Naive thymus-derived CD4-positive, alpha-beta T cell (primary cell): ENCODE measurements at regions of chr6 and their contacts with region 1.

Region 1: GRCh38 chr6:118776607-118777549 is 117.1 kb upstream of the ASF1A start:
- DNase-seq: peak in 8 of 9 donors; percentile 42 to 77 (median 65)
- ATAC-seq: peak; percentile 92
- H3K4me3 ChIP-seq: no peak overlapping the region
- H3K4me3 Mint-ChIP-seq: peak overlapping the region; percentile 1 to 75 (median 48)
- H3K27ac ChIP-seq: no peak overlapping the region
- H3K27ac Mint-ChIP-seq: peak overlapping the region in 8 of 9 donors; percentile 12 to 87 (median 75)
- H3K4me1 ChIP-seq: peaks cover 4 to 11% of the 10 kb centered on the region in 2 donors
- H3K4me1 Mint-ChIP-seq: peaks cover 16 to 31% (median 23%) of the 10 kb centered on the region in 7 donors
- H3K27me3 ChIP-seq: no peaks in the 10 kb centered on the region
- H3K27me3 Mint-ChIP-seq: peaks cover 0 to 17% (median 0%) of the 10 kb centered on the region in 5 donors

Region 2: DNA sequence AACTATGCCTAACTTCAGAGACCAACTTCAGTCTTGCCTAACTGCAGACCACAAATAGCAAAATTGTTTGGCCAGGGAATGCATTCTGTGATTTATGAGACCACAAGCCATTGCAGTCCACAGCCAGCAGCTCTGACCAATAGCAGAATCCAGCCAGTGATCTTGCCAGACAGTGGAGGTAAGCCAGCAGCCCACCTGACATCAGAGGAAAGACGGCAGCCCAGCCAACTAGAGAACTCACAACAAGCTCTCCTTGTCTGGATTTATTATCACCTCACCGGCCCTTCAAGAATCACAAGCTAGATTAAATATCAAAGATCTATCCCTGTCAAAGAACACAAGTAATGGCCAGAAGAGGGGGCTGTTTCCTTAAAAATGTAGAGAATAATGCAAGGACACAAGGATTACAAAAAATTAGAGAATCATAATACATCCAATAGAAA is 936.3 kb before region 1 on chr6:
- CTCF ChIA-PET with region 1: no interaction called
- POLR2A ChIA-PET with region 1: no interaction called
- intact Hi-C with region 1: no loop called
- DNase-seq: no peak
- ATAC-seq: no peak
- H3K4me3 ChIP-seq: no peak overlapping the region
- H3K4me3 Mint-ChIP-seq: no peak overlapping the region
- H3K27ac ChIP-seq: no peak overlapping the region
- H3K27ac Mint-ChIP-seq: no peak overlapping the region
- H3K4me1 ChIP-seq: no peaks in the 10 kb centered on the region
- H3K4me1 Mint-ChIP-seq: no peaks in the 10 kb centered on the region
- H3K27me3 ChIP-seq: no peaks in the 10 kb centered on the region
- H3K27me3 Mint-ChIP-seq: peaks cover 0 to 8% (median 0%) of the 10 kb centered on the region in 5 donors

Region 3: GRCh38 chr6:118122161-118122725 is 654.6 kb before region 1 on chr6:
- CTCF ChIA-PET with region 1: no interaction called
- POLR2A ChIA-PET with region 1: no interaction called
- intact Hi-C with region 1: no loop called
- DNase-seq: no peak
- ATAC-seq: no peak
- H3K4me3 ChIP-seq: no peak overlapping the region
- H3K4me3 Mint-ChIP-seq: no peak overlapping the region
- H3K27ac ChIP-seq: no peak overlapping the region
- H3K27ac Mint-ChIP-seq: no peak overlapping the region
- H3K4me1 ChIP-seq: no peaks in the 10 kb centered on the region
- H3K4me1 Mint-ChIP-seq: peaks cover 0 to 3% (median 0%) of the 10 kb centered on the region in 7 donors
- H3K27me3 ChIP-seq: no peaks in the 10 kb centered on the region
- H3K27me3 Mint-ChIP-seq: peaks cover 0 to 15% (median 8%) of the 10 kb centered on the region in 5 donors

Region 4: GRCh38 chr6:118618679-118619377 is 158.1 kb before region 1 on chr6:
- CTCF ChIA-PET with region 1: interaction called, 4 read pairs
- POLR2A ChIA-PET with region 1: interaction called, 5 read pairs
- intact Hi-C with region 1: loop called in 1 of 2 experiments (anchors 1 kb)
- DNase-seq: peak; percentile 36 to 70 (median 55)
- ATAC-seq: peak; percentile 92
- H3K4me3 ChIP-seq: no peak overlapping the region
- H3K4me3 Mint-ChIP-seq: peak overlapping the region in 3 of 10 donors; percentile 2 to 52 (median 46)
- H3K27ac ChIP-seq: no peak overlapping the region
- H3K27ac Mint-ChIP-seq: peak overlapping the region; percentile 26 to 96 (median 79)
- H3K4me1 ChIP-seq: peaks cover 0 to 8% of the 10 kb centered on the region in 2 donors
- H3K4me1 Mint-ChIP-seq: peaks cover 21 to 86% (median 77%) of the 10 kb centered on the region in 7 donors
- H3K27me3 ChIP-seq: no peaks in the 10 kb centered on the region
- H3K27me3 Mint-ChIP-seq: no peaks in the 10 kb centered on the region

Region 5: DNA sequence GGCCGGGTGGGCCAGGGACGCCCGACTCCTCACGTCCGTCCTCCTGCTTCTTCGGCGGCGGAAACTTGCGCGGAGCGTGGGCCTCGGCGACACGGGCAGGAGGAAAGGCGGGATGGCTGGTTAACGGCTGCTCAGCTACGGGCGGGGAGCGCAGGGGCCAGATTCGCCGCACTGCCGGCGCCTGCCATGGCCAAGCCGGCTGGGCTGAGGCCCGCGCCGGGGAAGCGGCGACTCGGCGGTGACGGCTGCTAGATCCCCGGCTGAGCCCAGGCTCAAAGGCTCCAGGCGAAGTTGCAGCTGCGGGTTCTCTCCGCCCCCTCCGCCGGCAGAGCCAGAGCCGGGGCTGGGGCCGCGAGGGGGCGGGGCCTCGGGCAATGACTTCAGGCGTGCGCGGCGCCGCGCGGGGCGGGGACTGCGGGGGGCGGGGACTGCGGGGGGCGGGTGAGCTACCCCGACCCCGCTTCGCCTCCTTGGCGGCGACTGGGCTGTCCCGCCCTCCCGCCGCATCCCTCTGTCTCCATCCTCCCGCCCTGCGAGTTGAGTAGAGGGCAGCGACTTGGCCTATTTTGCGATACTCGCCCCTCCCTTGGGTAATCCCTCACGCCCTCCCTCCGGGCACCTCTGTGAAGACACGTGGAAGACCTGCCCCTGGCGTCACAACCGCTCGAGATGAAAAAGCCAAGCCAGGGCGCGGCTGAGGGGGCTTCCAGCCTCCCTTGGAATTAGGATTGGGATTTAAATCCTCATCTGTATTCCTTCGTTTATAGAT is 125.4 kb before region 1 on chr6 and contains the start of gene CEP85L:
- CTCF ChIA-PET with region 1: interaction called, 3 read pairs
- POLR2A ChIA-PET with region 1: no interaction called
- intact Hi-C with region 1: loop called (anchors 1 kb)
- DNase-seq: peak; percentile 84 to 91 (median 89)
- ATAC-seq: peak; percentile 96
- H3K4me3 ChIP-seq: peak within 1 kb of the TSS; percentile 66
- H3K4me3 Mint-ChIP-seq: peak within 1 kb of the TSS; percentile 91 to 97 (median 94)
- H3K27ac ChIP-seq: peak within 1 kb of the TSS; percentile 87
- H3K27ac Mint-ChIP-seq: peak within 1 kb of the TSS; percentile 88 to 99 (median 94)
- H3K4me1 ChIP-seq: peaks cover 32 to 40% of the 10 kb centered on the region in 2 donors
- H3K4me1 Mint-ChIP-seq: peaks cover 33 to 73% (median 59%) of the 10 kb centered on the region in 7 donors
- H3K27me3 ChIP-seq: no peaks in the 10 kb centered on the region
- H3K27me3 Mint-ChIP-seq: no peaks in the 10 kb centered on the region
- total RNA-seq, gene CEP85L: 51.1 to 89.1 (median 78.6) TPM

Region 6: GRCh38 chr6:118679327-118679901 is 97.5 kb before region 1 on chr6:
- CTCF ChIA-PET with region 1: no interaction called
- POLR2A ChIA-PET with region 1: no interaction called
- intact Hi-C with region 1: no loop called
- DNase-seq: no peak
- ATAC-seq: no peak
- H3K4me3 ChIP-seq: no peak overlapping the region
- H3K4me3 Mint-ChIP-seq: peak overlapping the region in 6 of 10 donors; percentile 18 to 39 (median 33)
- H3K27ac ChIP-seq: no peak overlapping the region
- H3K27ac Mint-ChIP-seq: peak overlapping the region in 5 of 9 donors; percentile 18 to 90 (median 50)
- H3K4me1 ChIP-seq: peaks cover 11 to 30% of the 10 kb centered on the region in 2 donors
- H3K4me1 Mint-ChIP-seq: peaks cover 45 to 91% (median 84%) of the 10 kb centered on the region in 7 donors
- H3K27me3 ChIP-seq: no peaks in the 10 kb centered on the region
- H3K27me3 Mint-ChIP-seq: no peaks in the 10 kb centered on the region

Region 7: DNA sequence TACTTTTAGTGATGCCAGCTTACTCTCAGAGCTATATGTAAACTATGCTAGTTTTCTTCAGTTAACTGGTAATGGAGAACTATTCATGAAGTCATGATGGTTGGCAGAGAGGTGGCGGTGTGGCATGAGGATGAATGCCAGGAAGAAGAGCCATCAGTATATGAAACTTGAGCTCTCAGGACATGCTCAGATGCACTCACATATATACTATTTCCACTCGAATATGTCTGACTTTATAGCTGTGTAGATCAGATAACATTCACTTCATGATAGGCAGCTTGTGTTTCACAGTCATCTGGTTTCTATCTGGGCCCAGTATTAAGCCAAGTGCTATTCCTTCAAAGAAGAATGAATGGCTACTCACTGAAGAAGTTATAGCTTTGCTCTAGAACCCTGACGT is 79.3 kb before region 1 on chr6:
- CTCF ChIA-PET with region 1: interaction called, 5 read pairs
- POLR2A ChIA-PET with region 1: no interaction called
- intact Hi-C with region 1: loop called in 1 of 2 experiments (anchors 1 kb)
- DNase-seq: peak in 1 of 9 donors; percentile 24
- ATAC-seq: peak; percentile 37
- H3K4me3 ChIP-seq: no peak overlapping the region
- H3K4me3 Mint-ChIP-seq: peak overlapping the region in 3 of 10 donors; percentile 12 to 49 (median 15)
- H3K27ac ChIP-seq: no peak overlapping the region
- H3K27ac Mint-ChIP-seq: peak overlapping the region in 6 of 9 donors; percentile 17 to 75 (median 54)
- H3K4me1 ChIP-seq: peaks cover 0 to 6% of the 10 kb centered on the region in 2 donors
- H3K4me1 Mint-ChIP-seq: peaks cover 39 to 98% (median 85%) of the 10 kb centered on the region in 7 donors
- H3K27me3 ChIP-seq: no peaks in the 10 kb centered on the region
- H3K27me3 Mint-ChIP-seq: no peaks in the 10 kb centered on the region

Region 8: GRCh38 chr6:118859517-118860064 is 82.7 kb after region 1 on chr6:
- CTCF ChIA-PET with region 1: no interaction called
- POLR2A ChIA-PET with region 1: no interaction called
- intact Hi-C with region 1: no loop called
- DNase-seq: no peak
- ATAC-seq: no peak
- H3K4me3 ChIP-seq: no peak overlapping the region
- H3K4me3 Mint-ChIP-seq: peak overlapping the region in 5 of 10 donors; percentile 10 to 39 (median 16)
- H3K27ac ChIP-seq: no peak overlapping the region
- H3K27ac Mint-ChIP-seq: peak overlapping the region in 3 of 9 donors; percentile 32 to 48 (median 42)
- H3K4me1 ChIP-seq: peaks cover 3 to 6% of the 10 kb centered on the region in 2 donors
- H3K4me1 Mint-ChIP-seq: peaks cover 17 to 69% (median 54%) of the 10 kb centered on the region in 7 donors
- H3K27me3 ChIP-seq: no peaks in the 10 kb centered on the region
- H3K27me3 Mint-ChIP-seq: no peaks in the 10 kb centered on the region